Right cardiac atrium (tissue), 5 donors: ENCODE measurements at regions of chrX and their contacts with region 1.

Region 1: DNA sequence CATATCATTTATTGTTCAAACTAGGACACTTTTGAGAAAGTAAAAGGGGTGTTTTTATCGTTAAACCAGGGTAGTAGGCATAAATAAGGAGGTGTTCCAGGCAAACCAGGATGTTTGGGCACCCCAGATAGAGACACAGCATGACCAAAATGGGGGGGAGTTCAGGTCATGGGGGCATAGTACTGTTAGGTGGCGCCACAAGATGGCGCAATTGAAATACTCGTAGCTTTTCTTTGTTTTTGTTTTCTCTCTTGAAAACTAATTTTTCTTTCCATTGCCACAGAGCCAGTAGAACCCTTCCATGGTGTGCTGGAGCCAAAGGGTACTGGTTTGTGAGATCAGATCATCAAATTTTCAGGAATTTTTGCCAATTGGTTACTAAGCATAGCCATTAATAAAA is 283.4 kb downstream of the BCOR start:
- DNase-seq: peak in 1 of 3 donors; percentile 65
- ATAC-seq: peak in 1 of 2 donors; percentile 20
- H3K4me3 ChIP-seq: no peak overlapping the region
- H3K27ac ChIP-seq: no peak overlapping the region
- H3K4me1 ChIP-seq: peaks cover 3% of the 10 kb centered on the region
- H3K27me3 ChIP-seq: no peaks in the 10 kb centered on the region

Region 2: GRCh38 chrX:39730662-39731397 is 83.6 kb before region 1 on chrX:
- intact Hi-C with region 1: loop called in 2 of 4 experiments (anchors 10 kb)
- DNase-seq: peak; percentile 74 to 85 (median 85)
- ATAC-seq: peak; percentile 82 to 84
- H3K4me3 ChIP-seq: no peak overlapping the region
- H3K27ac ChIP-seq: no peak overlapping the region
- H3K4me1 ChIP-seq: peaks cover 8% of the 10 kb centered on the region
- H3K27me3 ChIP-seq: no peaks in the 10 kb centered on the region

Region 3: GRCh38 chrX:40006106-40007017 is 192.0 kb after region 1 on chrX:
- intact Hi-C with region 1: loop called in 2 of 4 experiments (anchors 5 to 10 kb)
- DNase-seq: peak; percentile 74 to 88 (median 88)
- ATAC-seq: peak; percentile 83 to 88
- H3K4me3 ChIP-seq: no peak overlapping the region
- H3K27ac ChIP-seq: no peak overlapping the region
- H3K4me1 ChIP-seq: peaks cover 6% of the 10 kb centered on the region
- H3K27me3 ChIP-seq: no peaks in the 10 kb centered on the region

Region 4: DNA sequence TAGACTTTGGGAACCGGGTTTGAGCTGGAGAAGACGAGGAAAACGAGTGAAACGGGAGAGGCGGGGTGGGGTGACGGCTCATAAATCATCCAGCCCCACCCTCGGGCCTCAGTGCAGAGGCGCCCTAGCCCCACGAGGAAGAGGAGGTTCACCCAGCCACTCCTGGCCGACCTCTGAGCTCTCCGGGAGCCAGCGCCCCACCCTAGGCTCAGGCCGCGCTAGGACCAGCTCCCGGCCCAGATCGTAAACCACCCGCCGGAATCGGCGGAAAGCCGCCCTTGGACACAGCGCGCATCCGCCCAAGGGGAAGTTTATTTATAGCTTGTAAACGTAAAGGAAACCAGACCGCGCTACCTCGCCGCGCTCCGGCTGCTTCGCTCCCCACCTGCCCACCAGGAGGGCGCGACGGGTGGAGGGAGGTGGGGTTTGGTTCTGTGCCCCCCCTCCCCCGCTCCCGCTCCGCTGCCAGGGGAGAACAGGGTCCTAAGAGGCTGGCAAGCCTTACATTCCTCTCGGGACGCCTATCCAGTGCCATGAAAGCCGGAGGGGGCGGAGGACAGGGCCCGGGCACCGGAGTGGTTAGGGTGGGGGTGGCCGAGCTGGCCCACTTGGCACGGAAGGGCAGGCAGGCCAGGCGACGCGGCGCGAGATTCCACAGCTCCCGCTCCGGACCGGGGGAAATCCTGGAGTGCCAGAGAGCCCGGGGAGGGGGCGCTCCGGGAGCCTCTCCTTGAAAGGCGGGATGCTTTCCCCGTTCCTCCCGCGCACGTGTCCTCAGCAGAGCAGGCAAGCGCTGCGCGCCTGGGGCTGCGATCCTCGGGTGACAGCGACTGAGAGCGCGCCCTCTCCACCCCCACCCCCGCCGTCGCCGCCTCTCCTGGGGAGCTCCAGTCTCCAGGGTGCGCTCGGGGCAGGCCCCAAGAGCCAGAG is 199.1 kb after region 1 on chrX:
- intact Hi-C with region 1: loop called in 2 of 4 experiments (anchors 5 to 10 kb)
- DNase-seq: peak; percentile 81 to 90 (median 87)
- ATAC-seq: peak; percentile 70 to 76
- H3K4me3 ChIP-seq: peak overlapping the region; percentile 29
- H3K27ac ChIP-seq: peak overlapping the region; percentile 96
- H3K4me1 ChIP-seq: peaks cover 8% of the 10 kb centered on the region
- H3K27me3 ChIP-seq: no peaks in the 10 kb centered on the region

Region 5: GRCh38 chrX:40097497-40098263 is 283.3 kb after region 1 on chrX and contains the start of gene BCOR:
- intact Hi-C with region 1: loop called in 1 of 4 experiments (anchors 10 kb)
- DNase-seq: peak; percentile 78 to 92 (median 89)
- ATAC-seq: peak; percentile 51 to 62
- H3K4me3 ChIP-seq: peak within 1 kb of the TSS; percentile 97
- H3K27ac ChIP-seq: peak within 1 kb of the TSS; percentile 96
- H3K4me1 ChIP-seq: no peaks in the 10 kb centered on the region
- H3K27me3 ChIP-seq: no peaks in the 10 kb centered on the region
- total RNA-seq, gene BCOR: 18.1 to 30.1 (median 20.5) TPM

Region 6: GRCh38 chrX:40169193-40170101 is 355.1 kb after region 1 on chrX:
- intact Hi-C with region 1: loop called in 2 of 4 experiments (anchors 10 kb)
- DNase-seq: peak in 2 of 3 donors; percentile 81
- ATAC-seq: peak in 1 of 2 donors; percentile 2
- H3K4me3 ChIP-seq: no peak overlapping the region
- H3K27ac ChIP-seq: no peak overlapping the region
- H3K4me1 ChIP-seq: peaks cover 5% of the 10 kb centered on the region
- H3K27me3 ChIP-seq: no peaks in the 10 kb centered on the region

Region 7: DNA sequence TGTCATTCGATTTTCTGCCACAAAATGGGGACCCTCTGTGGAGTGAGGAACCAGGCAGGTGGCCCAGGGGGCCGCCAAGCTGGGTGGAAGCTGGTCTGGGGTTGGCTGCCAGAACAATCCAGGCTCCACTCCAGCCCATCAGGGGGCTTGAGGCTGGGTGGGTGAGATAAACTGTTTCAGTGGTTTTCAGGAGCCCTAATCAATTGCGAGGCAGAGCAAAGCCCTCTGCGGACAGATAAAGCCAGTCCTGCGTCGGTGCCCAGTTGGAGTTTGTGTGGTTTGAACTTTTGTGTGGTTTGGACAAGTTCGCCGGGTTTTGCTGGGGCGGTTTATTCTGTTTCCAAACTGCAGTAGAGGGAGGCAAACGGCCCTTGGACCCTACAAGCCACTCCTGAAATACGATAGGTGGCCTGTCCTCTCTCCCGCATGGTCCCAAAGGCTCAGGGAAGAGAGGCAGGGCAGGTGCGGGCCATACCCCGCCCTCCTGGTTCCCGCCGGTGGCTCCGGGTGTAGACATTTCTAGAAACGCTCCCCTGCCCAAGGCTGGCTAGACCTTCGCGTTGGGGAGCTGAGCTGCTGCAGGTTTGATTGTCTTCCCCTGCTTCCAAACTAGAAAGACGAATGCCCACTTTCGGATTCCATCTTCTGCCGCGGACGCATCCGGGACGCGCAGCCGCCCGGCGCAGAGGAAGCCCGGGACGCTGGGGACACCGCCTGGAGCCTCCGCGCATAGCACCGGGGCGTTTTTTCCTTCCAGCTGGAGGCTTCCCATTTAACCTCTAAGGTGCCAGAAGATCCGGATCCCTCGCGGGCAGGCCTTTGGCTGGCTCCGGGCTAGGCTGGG is 452.3 kb after region 1 on chrX:
- intact Hi-C with region 1: loop called in 2 of 4 experiments (anchors 10 kb)
- DNase-seq: peak; percentile 69 to 88 (median 86)
- ATAC-seq: peak; percentile 88
- H3K4me3 ChIP-seq: peak overlapping the region; percentile 36
- H3K27ac ChIP-seq: peak overlapping the region; percentile 54
- H3K4me1 ChIP-seq: peaks cover 15% of the 10 kb centered on the region
- H3K27me3 ChIP-seq: no peaks in the 10 kb centered on the region